Activated CD4-positive, alpha-beta memory T cell treated with anti-CD3 and anti-CD28 coated beads, Interleukin-2, amount 10 ng/mL, durations not matched to agents 7 days and 5 days (primary cell): ENCODE measurements at regions of chr13 and their contacts with region 1.

Region 1: GRCh38 chr13:112587212-112587763 is 665 bp downstream of the TUBGCP3 start:
- DNase-seq: peak; percentile 68
- H3K4me3 Mint-ChIP-seq: peak overlapping the region; percentile 95
- H3K27ac Mint-ChIP-seq: peak overlapping the region; percentile 84
- H3K4me1 Mint-ChIP-seq: peaks cover 26% of the 10 kb centered on the region
- H3K27me3 Mint-ChIP-seq: no peaks in the 10 kb centered on the region

Region 2: GRCh38 chr13:112606109-112607001 is 19.1 kb after region 1 on chr13:
- CTCF ChIA-PET with region 1: interaction called, 17 read pairs
- POLR2A ChIA-PET with region 1: interaction called, 10 read pairs
- DNase-seq: peak; percentile 89
- H3K4me3 Mint-ChIP-seq: peak overlapping the region; percentile 66
- H3K27ac Mint-ChIP-seq: no peak overlapping the region
- H3K4me1 Mint-ChIP-seq: peaks cover 12% of the 10 kb centered on the region
- H3K27me3 Mint-ChIP-seq: peaks cover 38% of the 10 kb centered on the region

Region 3: DNA sequence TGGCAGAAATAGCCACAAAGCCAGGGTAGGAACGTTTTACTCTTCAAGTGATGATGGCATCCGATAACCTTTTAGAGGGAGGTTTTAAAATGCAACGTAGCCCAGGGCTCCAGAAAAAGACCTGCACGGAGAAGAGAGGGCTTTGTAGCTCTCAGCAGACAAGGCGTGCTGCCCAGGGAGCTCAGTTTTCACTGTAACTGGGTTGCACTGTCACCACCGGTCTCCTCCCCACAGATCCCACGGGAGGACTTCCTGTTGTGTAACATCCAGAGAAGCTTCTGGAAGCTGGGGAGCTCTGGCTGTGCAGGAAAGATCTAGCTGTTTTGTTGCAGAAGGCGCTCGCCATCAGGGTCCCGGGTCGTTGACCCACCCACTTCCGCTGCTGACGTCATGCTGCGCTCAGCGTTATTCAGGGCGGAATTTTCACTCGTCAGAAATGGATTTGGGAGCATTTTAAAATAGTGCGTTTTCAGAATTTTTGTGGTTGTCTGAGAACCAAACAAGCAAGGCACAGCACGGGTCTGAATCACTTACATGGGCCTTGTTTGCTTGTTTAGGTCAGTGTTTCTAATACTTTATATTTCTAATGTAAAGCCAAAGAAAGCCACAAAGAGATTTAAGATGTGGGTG is 153.3 kb after region 1 on chr13:
- CTCF ChIA-PET with region 1: no interaction called
- POLR2A ChIA-PET with region 1: no interaction called
- DNase-seq: no peak
- H3K4me3 Mint-ChIP-seq: no peak overlapping the region
- H3K27ac Mint-ChIP-seq: no peak overlapping the region
- H3K4me1 Mint-ChIP-seq: no peaks in the 10 kb centered on the region
- H3K27me3 Mint-ChIP-seq: no peaks in the 10 kb centered on the region